Activated CD4-positive, alpha-beta T cell treated with anti-CD3 and anti-CD28 coated beads, Interleukin-2, amount 10 ng/mL, durations not matched to agents 24 days and 14 days (primary cell): ENCODE measurements at regions of chr4 and their contacts with region 1.

Region 1: GRCh38 chr4:53132132-53132896 is 233.5 kb downstream of the SCFD2 start:
- DNase-seq: no peak
- H3K4me3 Mint-ChIP-seq: peak overlapping the region; percentile 40
- H3K27ac Mint-ChIP-seq: peak overlapping the region; percentile 93
- H3K4me1 Mint-ChIP-seq: peaks cover 17% of the 10 kb centered on the region
- H3K27me3 Mint-ChIP-seq: no peaks in the 10 kb centered on the region

Region 2: GRCh38 chr4:53015681-53016080 is 116.6 kb before region 1 on chr4:
- intact Hi-C with region 1: loop called (anchors 5 kb)
- DNase-seq: no peak
- H3K4me3 Mint-ChIP-seq: no peak overlapping the region
- H3K27ac Mint-ChIP-seq: peak overlapping the region; percentile 21
- H3K4me1 Mint-ChIP-seq: peaks cover 25% of the 10 kb centered on the region
- H3K27me3 Mint-ChIP-seq: no peaks in the 10 kb centered on the region

Region 3: DNA sequence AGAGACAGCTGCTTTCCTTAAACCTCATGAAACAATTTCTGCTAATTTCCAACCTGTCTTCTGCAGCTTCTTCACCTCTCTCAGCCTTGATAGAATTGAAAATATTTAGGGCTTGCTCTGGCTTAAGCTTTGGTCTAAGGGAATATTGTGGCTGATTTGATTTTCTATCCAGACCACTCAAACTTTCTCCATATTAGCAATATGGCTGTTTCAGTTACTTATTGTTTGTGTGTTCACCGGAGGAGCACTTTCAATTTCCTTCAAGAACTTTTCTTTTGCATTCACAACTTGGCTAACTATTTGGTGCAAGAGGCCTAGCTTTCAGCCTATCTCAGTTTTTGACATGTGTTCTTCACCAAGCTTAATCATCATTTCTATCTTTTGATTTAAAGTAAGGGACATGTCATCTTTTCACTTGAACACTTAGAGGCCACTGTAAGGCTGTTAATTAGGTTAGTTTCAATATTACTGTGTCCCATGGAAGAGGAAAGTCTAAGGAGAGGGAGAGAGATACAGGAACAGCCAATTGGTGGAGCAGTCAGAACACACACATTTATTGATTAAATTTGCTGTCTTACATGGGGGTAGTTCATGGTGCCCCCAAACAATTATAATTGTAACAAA is 57.0 kb before region 1 on chr4:
- intact Hi-C with region 1: loop called (anchors 1 kb)
- DNase-seq: no peak
- H3K4me3 Mint-ChIP-seq: peak overlapping the region; percentile 56
- H3K27ac Mint-ChIP-seq: peak overlapping the region; percentile 82
- H3K4me1 Mint-ChIP-seq: peaks cover 8% of the 10 kb centered on the region
- H3K27me3 Mint-ChIP-seq: no peaks in the 10 kb centered on the region

Region 4: GRCh38 chr4:53113431-53114225 is 18.7 kb before region 1 on chr4:
- intact Hi-C with region 1: loop called (anchors 1 kb)
- DNase-seq: no peak
- H3K4me3 Mint-ChIP-seq: no peak overlapping the region
- H3K27ac Mint-ChIP-seq: peak overlapping the region; percentile 92
- H3K4me1 Mint-ChIP-seq: peaks cover 20% of the 10 kb centered on the region
- H3K27me3 Mint-ChIP-seq: no peaks in the 10 kb centered on the region

Region 5: DNA sequence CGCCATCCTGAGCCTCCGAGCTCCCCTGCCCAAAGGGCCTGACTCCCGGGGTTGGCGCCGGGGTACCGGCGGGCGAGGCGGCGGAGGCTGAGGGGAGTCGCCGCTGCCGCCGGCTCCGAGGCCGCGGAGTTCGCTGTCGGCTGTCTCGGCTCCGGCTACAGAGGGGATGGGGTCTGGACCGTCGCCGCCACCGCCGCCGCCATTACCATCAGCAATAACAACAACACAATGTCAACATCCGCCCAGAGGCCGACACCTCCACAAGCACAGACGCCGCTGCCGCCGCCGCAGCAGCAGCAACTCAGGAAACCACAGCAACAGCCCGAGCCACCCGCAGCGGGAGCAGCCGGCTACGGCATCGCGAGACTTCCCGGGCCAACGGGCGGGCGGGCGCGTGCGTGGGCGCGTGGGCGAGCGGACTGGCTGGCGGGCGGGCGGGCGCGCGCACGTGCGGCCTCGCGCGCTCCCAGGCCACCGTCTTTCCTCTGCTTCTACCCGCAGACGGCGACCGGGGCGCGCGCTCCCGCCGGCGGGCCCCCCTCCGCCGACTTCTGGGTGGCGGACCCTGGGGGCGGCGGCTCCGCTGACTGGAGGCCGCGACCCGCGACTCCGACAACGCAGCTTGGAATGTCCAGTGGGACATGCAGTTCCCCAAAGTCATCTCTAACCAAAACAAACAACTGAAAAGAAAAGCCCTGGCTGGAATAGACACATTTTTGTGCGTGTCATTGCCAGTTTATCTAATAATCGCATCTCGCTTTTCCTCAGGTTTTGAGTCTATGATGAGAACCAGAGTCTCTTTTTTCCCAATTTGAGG is 932.2 kb after region 1 on chr4 and contains the start of gene CHIC2:
- intact Hi-C with region 1: loop called (anchors 5 kb)
- DNase-seq: peak; percentile 99
- H3K4me3 Mint-ChIP-seq: peak within 1 kb of the TSS; percentile 96
- H3K27ac Mint-ChIP-seq: peak within 1 kb of the TSS; percentile 92
- H3K4me1 Mint-ChIP-seq: peaks cover 33% of the 10 kb centered on the region
- H3K27me3 Mint-ChIP-seq: peaks cover 3% of the 10 kb centered on the region
- total RNA-seq, gene CHIC2: 20.0 and 23.8 TPM in 2 replicates